Activated naive CD4-positive, alpha-beta T cell treated with anti-CD3 and anti-CD28 coated beads for 36 hours (primary cell): ENCODE measurements at regions of chr14 and their contacts with region 1.

Region 1: DNA sequence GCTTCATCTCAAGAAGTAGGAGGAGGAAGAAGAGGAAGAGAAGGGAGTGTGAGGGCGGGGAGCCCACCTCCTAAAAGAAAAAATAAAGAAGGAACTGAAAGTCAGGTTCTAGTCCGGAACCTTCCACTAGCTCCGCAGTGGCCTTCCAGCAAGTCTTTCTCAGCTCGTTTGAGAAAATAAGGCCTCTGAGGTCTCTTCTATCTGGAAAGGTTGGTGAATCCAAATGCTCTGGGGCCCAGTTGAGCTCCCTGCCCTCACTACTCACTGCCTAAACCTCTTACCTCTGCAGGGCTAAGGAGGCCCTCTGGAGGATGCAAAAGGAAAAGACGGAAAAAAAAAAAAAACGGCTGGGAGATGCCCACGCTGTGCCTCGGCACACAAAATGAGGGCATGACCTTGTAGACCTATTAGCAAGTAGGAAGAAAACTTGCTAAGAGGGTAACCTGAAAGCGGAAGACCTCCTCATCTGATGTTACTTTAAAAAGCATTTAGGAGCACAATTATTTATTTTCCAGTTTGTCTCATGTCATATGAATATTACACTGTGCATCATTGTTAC is 35.9 kb downstream of the FBLN5 start:
- DNase-seq: peak; percentile 63
- H3K4me3 Mint-ChIP-seq: no peak overlapping the region
- H3K27ac Mint-ChIP-seq: no peak overlapping the region
- H3K4me1 Mint-ChIP-seq: peaks cover 6% of the 10 kb centered on the region
- H3K27me3 Mint-ChIP-seq: no peaks in the 10 kb centered on the region

Region 2: GRCh38 chr14:91484186-91484585 is 427.4 kb before region 1 on chr14:
- CTCF ChIA-PET with region 1: no interaction called
- intact Hi-C with region 1: loop called (anchors 1 kb)
- DNase-seq: peak; percentile 41
- H3K4me3 Mint-ChIP-seq: no peak overlapping the region
- H3K27ac Mint-ChIP-seq: peak overlapping the region; percentile 65
- H3K4me1 Mint-ChIP-seq: peaks cover 50% of the 10 kb centered on the region
- H3K27me3 Mint-ChIP-seq: no peaks in the 10 kb centered on the region

Region 3: DNA sequence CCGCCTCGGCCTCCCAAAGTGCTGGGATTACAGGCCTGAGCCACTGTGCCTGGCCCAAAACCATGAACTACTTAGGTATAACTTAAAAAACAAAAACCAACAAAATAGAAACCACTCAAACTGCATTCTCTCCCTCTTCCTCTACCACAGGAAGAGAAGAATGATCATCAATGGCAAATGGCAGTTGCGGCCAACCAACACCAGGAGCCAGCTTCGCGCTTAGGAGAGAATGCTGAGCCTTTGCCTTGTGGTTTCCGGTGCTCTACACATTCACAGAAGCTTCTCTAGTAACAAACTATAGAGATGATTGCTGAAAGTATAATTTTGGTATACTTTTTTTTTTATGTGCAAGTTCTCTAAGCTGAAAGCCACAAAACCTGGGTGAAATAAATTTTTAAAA is 196.7 kb before region 1 on chr14:
- CTCF ChIA-PET with region 1: interaction called, 10 read pairs
- intact Hi-C with region 1: loop called (anchors 1 kb)
- DNase-seq: peak; percentile 70
- H3K4me3 Mint-ChIP-seq: peak overlapping the region; percentile 29
- H3K27ac Mint-ChIP-seq: no peak overlapping the region
- H3K4me1 Mint-ChIP-seq: peaks cover 9% of the 10 kb centered on the region
- H3K27me3 Mint-ChIP-seq: no peaks in the 10 kb centered on the region

Region 4: DNA sequence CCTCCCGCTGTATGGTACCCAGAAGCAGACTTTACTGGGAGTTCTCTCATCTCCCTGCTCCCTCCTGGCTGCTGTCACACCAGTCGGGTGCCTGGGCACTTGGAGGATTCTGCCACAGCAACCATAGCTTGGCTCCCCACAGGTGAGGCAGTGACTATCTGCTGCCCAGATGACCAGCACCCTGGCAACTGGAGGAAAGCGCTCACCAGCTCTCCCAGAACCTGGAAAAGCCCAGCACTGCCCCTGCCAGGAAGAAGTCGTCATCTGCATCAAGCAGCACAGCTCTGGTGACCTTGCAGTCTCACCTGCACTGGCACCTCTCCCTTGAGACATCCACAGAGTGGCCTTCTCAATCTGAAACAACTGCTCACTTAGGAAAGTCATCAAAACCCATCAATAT is 12.3 kb before region 1 on chr14:
- CTCF ChIA-PET with region 1: interaction called, 15 read pairs
- intact Hi-C with region 1: no loop called
- DNase-seq: peak; percentile 68
- H3K4me3 Mint-ChIP-seq: no peak overlapping the region
- H3K27ac Mint-ChIP-seq: no peak overlapping the region
- H3K4me1 Mint-ChIP-seq: peaks cover 8% of the 10 kb centered on the region
- H3K27me3 Mint-ChIP-seq: no peaks in the 10 kb centered on the region